AG04449 (cell line): ENCODE measurements at regions of chr12 and their contacts with region 1.

Region 1: DNA sequence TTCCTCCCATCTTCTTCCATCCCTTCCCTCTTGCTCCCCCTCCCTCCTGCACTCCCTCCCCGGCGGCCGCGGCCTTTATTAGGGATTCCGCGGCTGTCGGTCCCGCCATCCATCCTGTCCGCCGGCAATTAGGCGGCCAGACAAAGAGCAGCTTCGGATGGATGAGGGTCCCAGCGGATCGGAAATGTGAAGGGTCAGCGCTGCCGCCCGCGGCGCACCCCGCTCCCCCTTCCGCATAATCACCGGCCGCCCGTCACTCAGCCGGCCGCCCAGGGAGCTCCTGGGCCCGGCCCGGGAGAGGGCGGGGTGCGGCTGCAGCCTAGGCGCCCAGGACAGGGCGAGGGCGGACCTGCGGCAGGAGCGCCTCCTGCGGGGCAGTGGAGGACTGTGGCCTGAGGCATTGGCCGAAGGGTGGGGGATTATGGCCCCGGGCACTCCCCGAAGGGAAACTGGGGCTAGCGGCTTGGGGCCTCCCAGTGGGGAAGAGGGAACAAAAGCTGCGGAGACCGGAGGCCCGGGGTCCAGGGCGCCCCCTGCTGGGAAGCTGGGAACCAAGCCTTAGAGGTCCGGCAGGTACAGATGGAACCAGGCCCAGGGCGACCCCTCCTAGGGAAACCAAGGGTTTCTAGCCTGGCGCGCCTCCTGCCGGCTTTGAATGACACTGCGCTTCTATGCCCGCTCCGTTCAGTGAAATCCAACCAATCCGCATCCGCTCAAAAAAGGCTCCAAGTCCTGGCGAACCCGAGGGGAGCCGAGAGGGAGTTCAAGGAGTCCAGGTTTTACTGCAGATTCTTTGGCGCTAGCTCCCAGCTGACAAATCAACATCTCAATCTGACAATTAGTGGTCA is 4.4 kb upstream of the DNAJC22 start:
- DNase-seq: no peak
- H3K4me3 ChIP-seq: peak overlapping the region; percentile 45
- CTCF ChIP-seq: peak; percentile 67

Region 2: GRCh38 chr12:49161092-49161795 is 181.0 kb before region 1 on chr12:
- CTCF ChIA-PET with region 1: no interaction called
- POLR2A ChIA-PET with region 1: no interaction called
- DNase-seq: no peak
- H3K4me3 ChIP-seq: no peak overlapping the region
- CTCF ChIP-seq: no peak

Region 3: DNA sequence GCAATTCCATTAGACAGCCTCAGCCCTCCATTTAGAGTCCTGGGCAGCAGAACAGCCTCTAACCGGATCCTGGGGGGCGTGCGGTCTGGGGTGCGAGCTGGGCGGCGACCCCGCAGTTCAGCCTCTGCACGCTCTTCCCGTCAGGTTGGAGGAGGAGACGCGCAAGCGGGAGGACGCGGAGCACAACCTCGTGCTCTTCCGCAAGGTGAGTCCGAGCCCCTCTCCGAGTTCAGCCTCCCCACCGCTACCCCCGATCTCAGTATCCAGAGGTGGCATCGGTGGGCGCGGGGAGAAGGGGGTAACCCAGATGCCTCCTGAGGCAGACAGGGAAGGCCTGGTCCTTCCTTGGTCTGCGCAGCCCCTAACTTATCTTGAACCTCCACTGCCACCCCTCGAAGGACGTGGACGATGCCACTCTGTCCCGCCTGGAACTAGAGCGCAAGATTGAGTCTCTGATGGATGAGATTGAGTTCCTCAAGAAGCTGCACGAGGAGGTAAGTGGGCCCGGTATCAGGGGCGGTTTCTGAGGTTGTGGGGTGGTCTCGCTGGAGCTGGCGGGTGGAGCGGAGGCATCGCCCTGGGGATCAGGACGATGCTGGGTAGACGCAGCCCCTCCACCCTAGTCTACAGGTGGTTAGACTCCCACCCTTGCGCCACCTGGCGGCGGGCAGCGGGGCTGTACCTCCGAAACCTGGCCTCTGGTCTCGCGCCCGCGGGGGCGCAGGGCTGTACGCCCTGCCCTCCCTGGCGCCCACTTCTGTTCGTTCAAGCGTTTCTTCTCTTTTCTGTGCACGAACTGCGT is 46.1 kb before region 1 on chr12:
- CTCF ChIA-PET with region 1: interaction called, 289 read pairs
- POLR2A ChIA-PET with region 1: no interaction called
- DNase-seq: no peak
- H3K4me3 ChIP-seq: no peak overlapping the region
- CTCF ChIP-seq: peak; percentile 74

Region 4: DNA sequence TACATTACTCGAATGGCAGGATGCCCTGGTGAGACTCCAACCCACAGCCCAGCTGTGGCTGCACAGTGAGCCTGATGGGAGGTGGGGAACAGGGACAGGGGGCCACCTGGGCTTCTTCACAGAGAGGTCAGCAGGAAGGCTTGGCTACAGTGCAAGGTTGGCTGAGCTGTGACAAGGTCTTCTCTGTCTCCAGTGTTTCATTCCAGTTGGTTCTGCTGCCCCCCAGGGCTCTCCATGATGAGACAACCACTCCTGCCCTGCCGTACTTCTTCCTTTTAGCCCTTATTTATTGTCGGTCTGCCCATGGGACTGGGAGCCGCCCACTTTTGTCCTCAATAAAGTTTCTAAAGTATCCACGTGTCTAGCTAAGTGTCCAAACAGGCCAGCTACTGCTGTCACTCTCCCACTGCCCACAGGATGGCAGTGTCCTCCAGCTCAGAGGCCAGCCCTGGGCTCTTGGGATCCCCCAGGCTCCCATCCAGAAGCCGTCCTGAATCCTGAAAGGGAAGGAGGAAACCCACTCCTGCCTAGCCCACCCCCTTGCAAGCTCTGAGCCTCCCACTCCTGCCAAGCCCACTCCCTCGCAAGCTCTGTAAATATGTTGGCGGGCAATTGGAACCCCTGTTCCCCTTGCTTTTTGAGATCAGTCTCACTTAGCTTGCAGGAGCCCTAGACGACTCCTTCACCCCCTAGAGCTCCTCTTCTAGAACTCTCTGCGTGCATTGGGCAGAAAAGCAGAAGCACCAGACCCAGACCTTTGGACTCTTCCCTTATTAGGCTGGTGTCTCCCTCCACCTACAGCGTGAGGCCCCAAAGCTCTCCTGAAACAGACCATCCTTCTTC is 10.7 kb before region 1 on chr12:
- CTCF ChIA-PET with region 1: interaction called, 424 read pairs
- POLR2A ChIA-PET with region 1: no interaction called
- DNase-seq: no peak
- H3K4me3 ChIP-seq: no peak overlapping the region
- CTCF ChIP-seq: peak; percentile 84

Region 5: GRCh38 chr12:49366652-49367380 is 24.5 kb after region 1 on chr12:
- CTCF ChIA-PET with region 1: interaction called, 21 read pairs
- POLR2A ChIA-PET with region 1: interaction called, 4 read pairs
- DNase-seq: peak; percentile 33
- H3K4me3 ChIP-seq: peak overlapping the region; percentile 87
- CTCF ChIP-seq: peak; percentile 34

Region 6: GRCh38 chr12:49503674-49504180 is 161.4 kb after region 1 on chr12:
- CTCF ChIA-PET with region 1: interaction called, 1,125 read pairs
- POLR2A ChIA-PET with region 1: no interaction called
- DNase-seq: no peak
- H3K4me3 ChIP-seq: no peak overlapping the region
- CTCF ChIP-seq: no peak

Region 7: DNA sequence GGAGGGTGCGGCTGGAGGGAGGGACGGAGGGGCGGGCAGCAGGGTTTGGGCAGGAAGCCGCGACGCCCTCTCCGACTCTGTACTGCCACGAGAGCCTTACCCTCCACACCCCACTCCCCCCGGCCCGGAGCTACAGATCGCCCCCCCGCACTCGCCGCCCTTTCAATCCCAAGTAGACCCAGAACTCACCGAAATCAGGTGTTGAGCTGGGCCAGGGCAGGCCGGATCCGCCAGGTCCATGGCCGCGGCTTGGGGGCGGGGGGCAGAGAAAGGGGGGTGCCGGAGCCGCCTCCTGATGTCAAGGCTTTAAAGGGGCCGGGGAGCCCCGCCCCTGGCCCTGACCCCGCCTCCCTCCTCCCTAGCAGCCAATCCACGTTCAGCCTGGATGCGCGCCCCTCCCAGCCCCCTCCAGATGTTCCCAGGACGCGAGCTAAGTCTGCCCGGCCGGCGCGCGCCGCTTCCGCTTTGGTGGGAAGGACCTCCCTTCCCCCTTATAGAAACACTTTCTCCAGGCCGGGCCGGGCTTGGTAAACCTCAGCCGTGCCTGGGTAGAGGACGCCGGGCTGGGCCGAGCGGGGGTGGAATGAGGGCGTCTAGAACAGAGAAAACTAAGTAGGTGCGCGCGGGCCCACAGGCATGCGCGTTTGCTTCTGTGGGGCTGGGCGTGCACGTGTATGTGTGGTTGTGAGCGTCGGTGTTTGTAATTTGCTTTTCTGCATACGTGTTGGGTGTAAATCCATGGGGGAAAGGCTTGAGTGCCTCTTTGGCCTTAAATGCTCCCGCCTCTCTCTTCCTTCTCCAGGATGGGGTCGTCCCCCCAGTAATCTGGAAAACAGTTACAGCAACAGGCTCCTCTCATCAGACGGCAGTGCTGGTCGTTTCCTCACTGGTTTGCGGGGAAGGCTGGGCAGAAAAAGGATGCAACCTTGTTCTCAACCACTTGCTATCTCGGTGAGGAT is 486.1 kb after region 1 on chr12 and contains the start of gene NCKAP5L:
- CTCF ChIA-PET with region 1: no interaction called
- POLR2A ChIA-PET with region 1: no interaction called
- DNase-seq: peak; percentile 76
- H3K4me3 ChIP-seq: peak within 1 kb of the TSS; percentile 87
- CTCF ChIP-seq: no peak